ENCODE measurements at regions of chr15 and their contacts with region 1.

Region 1: GRCh38 chr15:78872972-78873792 is 492 bp downstream of the MORF4L1 start:
- DNase-seq: peak in 1 of 2 donors; percentile 89
- H3K4me3 ChIP-seq: peak overlapping the region; percentile 98 to 99
- H3K27ac ChIP-seq: peak overlapping the region; percentile 100
- H3K4me1 ChIP-seq: peaks cover 5 to 16% of the 10 kb centered on the region in 2 donors
- H3K27me3 ChIP-seq: no peaks in the 10 kb centered on the region
- CTCF ChIP-seq: no peak

Region 2: DNA sequence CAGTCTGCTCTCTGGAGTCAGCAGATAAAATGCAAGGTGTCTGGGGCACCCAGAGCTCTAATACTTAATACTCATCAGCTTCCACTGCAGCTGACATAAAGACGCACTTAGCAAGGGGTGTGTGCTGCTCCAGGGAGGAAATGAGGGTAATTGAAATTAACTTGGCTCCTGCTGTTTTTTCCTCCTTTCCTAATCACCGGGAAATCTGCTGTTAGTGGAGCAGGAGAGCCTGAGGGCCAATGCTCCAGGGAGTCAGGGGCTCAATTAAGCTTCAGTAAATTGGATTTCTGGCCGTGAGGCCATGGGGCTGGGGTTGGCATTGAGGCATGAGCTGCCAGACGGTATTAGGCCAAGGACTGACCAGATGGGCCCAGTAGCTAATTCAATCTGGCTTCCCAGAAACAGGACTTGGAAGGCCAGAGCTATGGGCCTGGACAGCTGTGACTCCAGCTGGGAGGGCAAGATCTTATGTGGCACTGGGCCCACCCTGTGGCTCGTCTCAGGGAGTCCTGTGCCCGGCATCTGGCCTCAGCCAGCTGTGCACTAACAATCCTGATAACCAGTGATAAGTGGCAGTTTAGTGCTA is 201.5 kb before region 1 on chr15:
- intact Hi-C with region 1: no loop called
- DNase-seq: no peak
- H3K4me3 ChIP-seq: no peak overlapping the region
- H3K27ac ChIP-seq: no peak overlapping the region
- H3K4me1 ChIP-seq: no peaks in the 10 kb centered on the region
- H3K27me3 ChIP-seq: no peaks in the 10 kb centered on the region
- CTCF ChIP-seq: no peak

Region 3: DNA sequence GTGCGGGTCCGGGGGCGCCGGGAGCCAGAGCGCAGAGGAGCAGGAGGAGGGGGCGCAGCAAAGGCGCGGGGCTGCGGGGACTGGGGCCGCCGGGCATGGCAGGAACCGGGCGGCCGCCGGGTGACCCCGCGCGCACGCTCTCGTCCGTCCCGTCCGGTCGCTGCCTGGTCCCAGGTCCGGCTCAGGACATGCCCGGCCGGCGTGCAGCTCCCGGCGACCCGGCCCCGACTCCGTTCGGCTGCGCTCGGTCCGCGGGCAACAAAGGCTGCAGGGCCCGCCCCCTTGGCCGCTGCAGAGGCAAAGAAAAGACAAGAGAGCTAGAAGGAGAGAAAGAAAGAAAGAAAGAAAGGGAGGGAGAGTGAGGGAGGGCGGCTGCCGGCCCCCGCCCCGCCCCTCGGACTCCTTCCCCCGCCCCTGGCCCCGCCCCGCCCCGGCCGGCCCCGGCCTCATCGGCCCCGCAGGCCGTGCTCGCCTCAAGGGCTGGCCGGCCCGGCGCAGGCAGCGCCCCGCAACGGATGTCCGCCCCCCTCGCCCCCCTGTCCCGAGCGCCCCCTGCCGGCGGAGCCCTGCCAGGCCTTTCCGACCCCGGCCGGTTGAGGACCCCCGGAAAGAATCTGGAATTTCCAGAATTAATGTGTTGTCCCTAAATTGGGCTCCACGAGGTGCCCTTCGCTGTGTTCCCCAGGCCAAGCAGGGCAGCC is 61.9 kb before region 1 on chr15 and contains the start of gene ADAMTS7:
- intact Hi-C with region 1: loop called (anchors 1 kb)
- DNase-seq: peak in 1 of 2 donors; percentile 86
- H3K4me3 ChIP-seq: peak within 1 kb of the TSS; percentile 80 to 81
- H3K27ac ChIP-seq: peak within 1 kb of the TSS; percentile 87 to 93
- H3K4me1 ChIP-seq: peaks cover 6 to 7% of the 10 kb centered on the region in 2 donors
- H3K27me3 ChIP-seq: no peaks in the 10 kb centered on the region
- CTCF ChIP-seq: peak; percentile 70 to 77 (median 77)
- total RNA-seq, gene ADAMTS7: 33.3 TPM

Region 4: DNA sequence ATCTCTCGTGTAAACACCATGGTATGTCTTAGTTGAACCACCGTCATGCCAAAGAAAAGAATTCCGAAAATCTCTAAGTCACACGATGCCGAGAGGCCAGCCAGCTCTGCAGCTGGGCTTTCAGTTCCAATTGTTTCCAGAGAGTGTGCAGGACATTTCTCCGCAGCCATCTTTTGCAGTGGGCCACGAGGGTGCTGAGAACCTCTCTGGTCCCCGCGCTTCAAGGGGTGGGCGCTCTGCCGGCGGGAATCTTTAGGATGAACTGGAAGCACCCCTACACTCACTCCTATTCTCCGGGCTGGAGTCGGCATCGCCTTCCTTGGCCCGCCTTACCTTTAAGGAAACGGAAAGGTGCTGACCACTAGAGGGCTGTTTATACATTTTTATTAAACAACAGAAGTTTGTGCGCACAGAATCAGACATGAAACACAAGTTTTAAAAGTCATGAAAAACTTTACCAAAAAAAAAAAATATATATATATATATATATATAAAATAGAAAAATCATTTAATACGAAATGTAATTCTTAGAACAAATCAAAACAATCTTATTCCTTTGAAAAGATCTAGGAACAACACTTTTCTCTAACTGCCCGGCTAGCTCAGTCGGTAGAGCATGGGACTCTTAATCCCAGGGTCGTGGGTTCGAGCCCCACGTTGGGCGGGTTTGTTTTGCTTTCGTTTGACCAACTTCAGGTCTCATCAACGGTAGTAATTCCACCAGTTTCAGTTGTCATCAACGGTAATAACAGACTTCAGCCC is 13.0 kb before region 1 on chr15:
- intact Hi-C with region 1: loop called (anchors 1 kb)
- DNase-seq: peak in 1 of 2 donors; percentile 87
- H3K4me3 ChIP-seq: peak overlapping the region; percentile 50 to 65
- H3K27ac ChIP-seq: peak overlapping the region; percentile 83
- H3K4me1 ChIP-seq: peaks cover 6 to 12% of the 10 kb centered on the region in 2 donors
- H3K27me3 ChIP-seq: no peaks in the 10 kb centered on the region
- CTCF ChIP-seq: peak; percentile 48 to 61 (median 52)

Measured in ascending aorta (tissue), 2 donors.